ENCODE measurements at regions of chr2 and their contacts with region 1.

Region 1: GRCh38 chr2:12728221-12728777 is 11.6 kb downstream of the TRIB2 start:
- DNase-seq: no peak
- H3K4me3 ChIP-seq: no peak overlapping the region
- H3K27ac ChIP-seq: no peak overlapping the region
- H3K4me1 ChIP-seq: peaks cover 22 to 71% of the 10 kb centered on the region in 2 donors
- H3K27me3 ChIP-seq: no peaks in the 10 kb centered on the region
- CTCF ChIP-seq: no peak
- POLR2A ChIP-seq: no peak

Region 2: DNA sequence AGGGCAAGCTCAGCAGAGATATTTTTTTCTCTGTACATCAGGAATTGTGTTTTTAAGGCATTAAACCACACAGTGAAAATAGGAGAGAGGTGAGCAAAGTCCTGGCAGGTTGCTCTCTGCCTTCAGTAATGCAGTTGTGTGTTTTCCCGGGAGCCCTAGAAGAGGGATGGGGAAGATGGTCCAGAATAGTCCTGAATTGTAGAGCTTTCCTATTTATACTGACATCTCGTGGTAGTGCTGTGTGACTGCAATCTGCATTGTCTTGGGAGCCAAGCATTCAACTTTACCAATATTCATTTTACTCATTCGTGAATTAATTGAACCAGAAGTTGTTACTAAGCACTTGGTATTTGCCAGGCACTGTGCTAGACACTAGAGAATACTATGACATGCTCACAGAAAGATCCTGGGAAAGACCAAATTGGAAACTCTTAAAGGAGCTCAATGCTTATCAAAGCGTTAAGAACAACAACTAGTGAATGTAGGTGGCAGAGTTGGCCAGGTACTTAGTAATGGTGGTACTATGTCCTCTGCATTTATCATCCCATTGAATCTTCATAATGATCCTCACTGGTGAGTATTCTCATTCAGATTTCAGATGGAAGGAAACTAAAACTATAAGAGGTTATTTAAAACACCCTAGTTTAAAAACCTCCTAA is 203.0 kb after region 1 on chr2:
- intact Hi-C with region 1: loop called (anchors 10 kb)
- DNase-seq: no peak
- H3K4me3 ChIP-seq: no peak overlapping the region
- H3K27ac ChIP-seq: no peak overlapping the region
- H3K4me1 ChIP-seq: no peaks in the 10 kb centered on the region
- H3K27me3 ChIP-seq: no peaks in the 10 kb centered on the region
- CTCF ChIP-seq: peak in 5 of 6 experiments; percentile 56 to 81 (median 62)
- POLR2A ChIP-seq: no peak